Endothelial cell of umbilical vein (primary cell): ENCODE measurements at regions of chr10 and their contacts with region 1.

Region 1: GRCh38 chr10:52779541-52780390 is 7.2 kb upstream of the MBL2 start:
- DNase-seq: peak; percentile 70
- H3K4me3 ChIP-seq: no peak overlapping the region
- H3K27ac ChIP-seq: no peak overlapping the region
- H3K4me1 ChIP-seq: no peaks in the 10 kb centered on the region
- H3K27me3 ChIP-seq: peaks cover 5 to 10% of the 10 kb centered on the region in 2 experiments
- CTCF ChIP-seq: peak; percentile 88 to 94
- POLR2A ChIP-seq: no peak

Region 2: GRCh38 chr10:52740913-52741675 is 38.7 kb before region 1 on chr10:
- CTCF ChIA-PET with region 1: interaction called, 182 read pairs
- POLR2A ChIA-PET with region 1: no interaction called
- dilution Hi-C with region 1: no loop called
- intact Hi-C with region 1: loop called (anchors 1 kb)
- DNase-seq: peak; percentile 52
- H3K4me3 ChIP-seq: no peak overlapping the region
- H3K27ac ChIP-seq: no peak overlapping the region
- H3K4me1 ChIP-seq: no peaks in the 10 kb centered on the region
- H3K27me3 ChIP-seq: no peaks in the 10 kb centered on the region
- CTCF ChIP-seq: peak; percentile 85 to 90
- POLR2A ChIP-seq: no peak

Region 3: GRCh38 chr10:52746169-52746568 is 33.6 kb before region 1 on chr10:
- CTCF ChIA-PET with region 1: interaction called, 182 read pairs
- POLR2A ChIA-PET with region 1: no interaction called
- dilution Hi-C with region 1: no loop called
- intact Hi-C with region 1: loop called (anchors 1 kb)
- DNase-seq: peak; percentile 7
- H3K4me3 ChIP-seq: no peak overlapping the region
- H3K27ac ChIP-seq: no peak overlapping the region
- H3K4me1 ChIP-seq: no peaks in the 10 kb centered on the region
- H3K27me3 ChIP-seq: no peaks in the 10 kb centered on the region
- CTCF ChIP-seq: peak in 1 of 2 donors; percentile 29
- POLR2A ChIP-seq: no peak

Region 4: GRCh38 chr10:52759154-52759553 is 20.6 kb before region 1 on chr10:
- CTCF ChIA-PET with region 1: interaction called, 14 read pairs
- POLR2A ChIA-PET with region 1: no interaction called
- dilution Hi-C with region 1: no loop called
- intact Hi-C with region 1: no loop called
- DNase-seq: no peak
- H3K4me3 ChIP-seq: no peak overlapping the region
- H3K27ac ChIP-seq: no peak overlapping the region
- H3K4me1 ChIP-seq: no peaks in the 10 kb centered on the region
- H3K27me3 ChIP-seq: peaks cover 7 to 21% of the 10 kb centered on the region in 2 experiments
- CTCF ChIP-seq: no peak
- POLR2A ChIP-seq: no peak

Region 5: DNA sequence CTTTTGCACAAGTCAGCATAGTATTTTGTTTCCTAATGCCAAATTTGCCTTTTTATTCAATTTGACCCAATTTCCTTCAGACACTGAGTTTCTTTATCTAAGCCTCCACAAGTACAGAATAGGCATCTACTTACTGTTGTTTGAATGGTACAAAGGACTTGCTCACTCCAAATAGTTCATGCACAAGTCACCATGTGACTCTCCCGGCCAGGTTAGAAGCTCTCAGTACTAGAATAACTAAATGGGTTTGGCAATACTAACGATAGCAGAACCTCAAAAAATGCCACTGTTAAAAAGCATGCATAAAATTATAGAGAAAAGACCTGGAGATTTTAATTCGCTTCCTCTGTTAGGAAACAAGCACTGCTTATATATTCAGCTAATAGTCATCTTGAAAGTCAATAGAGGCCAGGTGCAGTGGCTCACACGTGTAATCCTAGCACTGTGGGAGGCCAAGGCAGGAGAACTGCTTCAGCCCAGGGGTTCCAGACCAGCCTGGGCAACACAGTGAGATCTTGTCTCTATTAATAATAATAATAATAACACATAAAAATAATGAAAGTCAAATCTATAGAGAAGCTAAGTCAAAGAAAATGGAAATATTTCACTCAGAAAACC is 328.7 kb after region 1 on chr10:
- CTCF ChIA-PET with region 1: no interaction called
- POLR2A ChIA-PET with region 1: no interaction called
- dilution Hi-C with region 1: no loop called
- intact Hi-C with region 1: no loop called
- DNase-seq: no peak
- H3K4me3 ChIP-seq: no peak overlapping the region
- H3K27ac ChIP-seq: no peak overlapping the region
- H3K4me1 ChIP-seq: no peaks in the 10 kb centered on the region
- H3K27me3 ChIP-seq: no peaks in the 10 kb centered on the region
- CTCF ChIP-seq: no peak
- POLR2A ChIP-seq: no peak